ENCODE measurements at regions of chr2 and their contacts with region 1.

Region 1: DNA sequence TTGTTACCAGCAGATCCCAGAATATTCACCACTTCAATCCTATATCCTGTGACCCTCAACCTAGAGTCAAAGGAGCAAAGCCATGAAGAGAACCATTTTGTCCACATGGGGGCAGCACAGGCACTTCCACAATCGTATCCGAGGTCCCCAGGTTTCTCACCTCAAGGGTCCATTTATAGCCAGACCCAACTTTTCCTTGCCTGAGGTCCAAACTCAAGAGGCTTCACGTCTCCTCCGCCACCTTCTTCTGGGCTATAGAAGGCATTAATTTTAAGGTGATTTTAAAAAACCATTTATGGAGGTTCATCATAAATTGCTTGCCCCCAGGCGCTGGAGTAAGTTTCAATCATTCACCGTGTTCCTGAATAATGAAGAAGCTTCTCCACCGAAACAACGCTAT is 111.6 kb upstream of the NABP1 start:
- DNase-seq: peak; percentile 77
- H3K4me3 Mint-ChIP-seq: no peak overlapping the region
- H3K27ac Mint-ChIP-seq: no peak overlapping the region
- H3K4me1 Mint-ChIP-seq: peaks cover 49% of the 10 kb centered on the region
- H3K27me3 Mint-ChIP-seq: peaks cover 60% of the 10 kb centered on the region

Region 2: DNA sequence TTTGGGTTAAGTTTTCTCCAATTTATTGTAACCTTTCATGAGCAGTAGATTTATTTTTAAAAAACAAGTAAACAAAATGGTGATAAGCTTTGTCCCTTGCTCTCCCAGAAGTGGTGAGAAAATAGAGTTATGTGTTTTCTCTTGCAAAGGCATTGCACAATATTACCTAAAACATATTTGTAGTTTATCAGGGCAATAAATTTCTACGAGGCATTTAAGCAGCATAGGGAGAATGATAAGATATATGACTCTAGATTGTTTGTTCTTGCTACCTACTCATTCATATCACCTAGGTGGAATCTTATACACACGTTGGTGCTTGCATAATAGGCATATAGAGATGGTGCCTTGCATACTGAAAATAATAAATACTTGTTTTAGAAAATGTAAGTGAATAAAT is 119.4 kb before region 1 on chr2:
- CTCF ChIA-PET with region 1: no interaction called
- DNase-seq: no peak
- H3K4me3 Mint-ChIP-seq: no peak overlapping the region
- H3K27ac Mint-ChIP-seq: no peak overlapping the region
- H3K4me1 Mint-ChIP-seq: no peaks in the 10 kb centered on the region
- H3K27me3 Mint-ChIP-seq: peaks cover 10% of the 10 kb centered on the region

Region 3: GRCh38 chr2:191691016-191691735 is 124.8 kb after region 1 on chr2:
- CTCF ChIA-PET with region 1: interaction called, 23 read pairs
- DNase-seq: peak; percentile 64
- H3K4me3 Mint-ChIP-seq: no peak overlapping the region
- H3K27ac Mint-ChIP-seq: no peak overlapping the region
- H3K4me1 Mint-ChIP-seq: peaks cover 16% of the 10 kb centered on the region
- H3K27me3 Mint-ChIP-seq: no peaks in the 10 kb centered on the region

Region 4: GRCh38 chr2:191699341-191699945 is 133.1 kb after region 1 on chr2:
- CTCF ChIA-PET with region 1: interaction called, 11 read pairs
- DNase-seq: no peak
- H3K4me3 Mint-ChIP-seq: no peak overlapping the region
- H3K27ac Mint-ChIP-seq: no peak overlapping the region
- H3K4me1 Mint-ChIP-seq: no peaks in the 10 kb centered on the region
- H3K27me3 Mint-ChIP-seq: no peaks in the 10 kb centered on the region

Region 5: GRCh38 chr2:192162392-192163042 is 596.2 kb after region 1 on chr2:
- CTCF ChIA-PET with region 1: interaction called, 25 read pairs
- DNase-seq: peak; percentile 70
- H3K4me3 Mint-ChIP-seq: no peak overlapping the region
- H3K27ac Mint-ChIP-seq: no peak overlapping the region
- H3K4me1 Mint-ChIP-seq: peaks cover 5% of the 10 kb centered on the region
- H3K27me3 Mint-ChIP-seq: no peaks in the 10 kb centered on the region